Panc1 (cell line): ENCODE measurements at regions of chrX and their contacts with region 1.

Region 1: DNA sequence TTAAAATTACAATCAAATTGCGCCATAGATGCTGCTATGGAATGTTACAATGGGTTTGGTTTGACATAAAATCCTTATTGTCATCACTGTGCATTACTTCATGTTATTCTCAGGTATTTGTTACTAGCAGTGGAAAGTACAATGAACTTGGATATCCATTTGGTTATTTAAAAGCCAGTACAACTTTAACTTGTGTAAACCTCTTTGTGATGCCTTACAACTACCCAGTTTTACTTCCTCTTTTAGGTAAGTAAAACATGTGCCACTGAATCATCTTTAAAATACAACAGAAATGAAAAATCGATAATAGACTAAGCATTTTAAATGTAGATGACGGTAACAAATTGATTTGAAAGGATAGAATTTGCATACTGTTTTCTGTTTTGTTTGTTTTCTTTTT is 35.6 kb downstream of the INTS6L start:
- DNase-seq: no peak
- ATAC-seq: no peak
- H3K4me3 ChIP-seq: no peak overlapping the region
- H3K27ac ChIP-seq: no peak overlapping the region
- H3K4me1 ChIP-seq: no peaks in the 10 kb centered on the region
- H3K27me3 ChIP-seq: no peaks in the 10 kb centered on the region
- CTCF ChIP-seq: no peak

Region 2: DNA sequence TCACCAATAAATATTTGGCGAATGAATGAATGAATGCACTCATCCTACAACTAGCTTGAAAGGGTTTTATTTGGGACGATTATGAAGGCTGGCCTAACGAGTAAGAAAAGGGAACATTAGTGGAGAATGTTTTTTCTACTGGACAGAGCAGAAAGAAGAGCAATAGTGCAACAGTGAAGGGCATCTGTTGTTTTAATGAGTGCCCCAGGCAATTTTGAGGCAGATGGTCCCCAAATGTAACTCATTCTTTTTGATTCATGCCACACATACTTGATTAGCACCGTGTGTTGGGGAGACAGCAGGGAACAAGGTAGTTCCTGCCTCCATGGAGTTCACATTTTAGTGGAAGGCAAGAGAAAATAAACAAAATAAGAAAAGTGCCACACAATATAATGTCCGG is 58.3 kb before region 1 on chrX:
- CTCF ChIA-PET with region 1: no interaction called
- POLR2A ChIA-PET with region 1: no interaction called
- in situ Hi-C with region 1: no loop called
- intact Hi-C with region 1: loop called (anchors 10 kb)
- DNase-seq: no peak
- ATAC-seq: no peak
- H3K4me3 ChIP-seq: no peak overlapping the region
- H3K27ac ChIP-seq: no peak overlapping the region
- H3K4me1 ChIP-seq: no peaks in the 10 kb centered on the region
- H3K27me3 ChIP-seq: peaks cover 2% of the 10 kb centered on the region
- CTCF ChIP-seq: no peak; the same call in 1 of the 2 replicates